Motor neuron (in vitro differentiated cells): ENCODE measurements at regions of chr14 and their contacts with region 1.

Region 1: GRCh38 chr14:67426983-67427606 is 15.1 kb upstream of the PLEK2 start:
- ATAC-seq: peak; percentile 82 to 94 (median 90)
- H3K4me3 ChIP-seq: no peak overlapping the region
- H3K27ac ChIP-seq: no peak overlapping the region
- H3K4me1 ChIP-seq: peaks cover 0 to 4% of the 10 kb centered on the region in 2 donors

Region 2: GRCh38 chr14:67111022-67111421 is 316.1 kb before region 1 on chr14:
- in situ Hi-C with region 1: no loop called
- ATAC-seq: peak in 1 of 8 experiments; percentile 70
- H3K4me3 ChIP-seq: no peak overlapping the region
- H3K27ac ChIP-seq: no peak overlapping the region
- H3K4me1 ChIP-seq: peaks cover 0 to 11% of the 10 kb centered on the region in 2 donors

Region 3: GRCh38 chr14:67695394-67695949 is 268.4 kb after region 1 on chr14 and contains the start of gene RDH11:
- in situ Hi-C with region 1: loop called in 1 of 9 experiments (anchors 25 kb)
- ATAC-seq: peak; percentile 80 to 97 (median 94)
- H3K4me3 ChIP-seq: peak within 1 kb of the TSS; percentile 74 to 99 (median 96)
- H3K27ac ChIP-seq: peak within 1 kb of the TSS; percentile 82 to 89
- H3K4me1 ChIP-seq: peaks cover 5 to 7% of the 10 kb centered on the region in 2 donors
- total RNA-seq, gene RDH11: 60.9 to 89.8 (median 71.0) TPM